Posterior vena cava (tissue), 2 donors: ENCODE measurements at regions of chr11 and their contacts with region 1.

Region 1: GRCh38 chr11:12008790-12009616 is 577 bp upstream of the DKK3 start:
- DNase-seq: no peak

Region 2: GRCh38 chr11:11946180-11946579 is 62.8 kb before region 1 on chr11:
- intact Hi-C with region 1: no loop called
- DNase-seq: no peak

Region 3: GRCh38 chr11:11977206-11977938 is 31.6 kb before region 1 on chr11:
- intact Hi-C with region 1: loop called in 1 of 2 experiments (anchors 5 kb)
- DNase-seq: peak; percentile 93

Region 4: GRCh38 chr11:11987503-11988022 is 21.4 kb before region 1 on chr11:
- intact Hi-C with region 1: no loop called
- DNase-seq: no peak